AG04449 (cell line): ENCODE measurements at regions of chr3 and their contacts with region 1.

Region 1: GRCh38 chr3:66971891-66972551 is 26.1 kb upstream of the KBTBD8 start:
- DNase-seq: peak; percentile 5
- H3K4me3 ChIP-seq: peak overlapping the region; percentile 51
- CTCF ChIP-seq: peak; percentile 91

Region 2: GRCh38 chr3:66898155-66898554 is 73.9 kb before region 1 on chr3:
- CTCF ChIA-PET with region 1: no interaction called
- POLR2A ChIA-PET with region 1: no interaction called
- DNase-seq: no peak
- H3K4me3 ChIP-seq: no peak overlapping the region
- CTCF ChIP-seq: no peak

Region 3: GRCh38 chr3:66922058-66922457 is 50.0 kb before region 1 on chr3:
- CTCF ChIA-PET with region 1: no interaction called
- POLR2A ChIA-PET with region 1: no interaction called
- DNase-seq: no peak
- H3K4me3 ChIP-seq: no peak overlapping the region
- CTCF ChIP-seq: no peak

Region 4: DNA sequence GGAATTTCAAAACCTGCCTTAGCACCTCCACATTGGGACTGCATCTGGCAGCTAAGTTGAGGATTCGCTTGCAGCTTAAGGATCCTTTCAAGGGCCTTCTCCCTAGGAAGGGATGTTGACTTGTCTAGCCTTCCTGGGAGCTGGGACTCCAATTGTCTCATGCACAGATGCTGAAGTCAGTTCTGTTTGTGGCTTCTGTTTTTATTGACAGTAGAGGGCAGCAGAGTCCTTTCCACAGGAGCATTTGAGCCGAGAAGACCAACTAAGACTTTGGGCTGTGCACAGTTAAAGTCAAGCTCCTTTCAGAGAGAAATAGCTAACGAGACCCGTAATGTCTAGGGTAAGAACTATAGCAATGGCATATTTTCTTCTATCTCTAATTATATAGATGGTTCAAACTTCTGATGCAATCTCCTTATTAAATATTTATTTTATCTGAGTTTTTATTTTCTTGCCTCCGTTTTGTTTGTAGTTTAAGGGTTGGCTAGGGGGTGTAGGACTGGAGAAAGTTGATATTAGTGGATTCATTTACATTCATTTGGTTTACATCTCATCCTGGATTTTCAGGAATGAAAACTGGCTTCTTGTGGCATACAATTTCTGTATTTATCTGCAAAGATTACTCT is 33.6 kb before region 1 on chr3:
- CTCF ChIA-PET with region 1: interaction called, 26 read pairs
- POLR2A ChIA-PET with region 1: no interaction called
- DNase-seq: no peak
- H3K4me3 ChIP-seq: no peak overlapping the region
- CTCF ChIP-seq: peak; percentile 68

Region 5: DNA sequence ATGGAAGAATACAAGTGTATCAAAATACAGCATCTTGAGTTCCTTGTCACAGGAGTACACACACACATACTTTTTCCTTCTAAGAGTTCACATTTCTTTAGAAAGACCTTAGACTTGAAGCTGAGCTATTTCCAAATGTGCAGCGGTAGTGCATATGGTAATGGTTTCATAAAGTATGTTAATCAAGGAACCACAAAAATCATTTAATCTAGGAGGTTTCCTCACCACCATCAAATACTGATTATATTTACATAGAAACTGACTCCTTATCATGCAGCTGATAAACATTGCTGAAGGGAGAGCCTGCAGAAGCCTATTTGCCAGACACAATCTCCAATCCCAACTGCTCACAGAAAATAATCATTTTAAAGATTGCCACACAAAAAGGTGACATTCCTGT is 14.0 kb before region 1 on chr3:
- CTCF ChIA-PET with region 1: interaction called, 18 read pairs
- POLR2A ChIA-PET with region 1: no interaction called
- DNase-seq: no peak
- H3K4me3 ChIP-seq: no peak overlapping the region
- CTCF ChIP-seq: no peak

Region 6: GRCh38 chr3:66989860-66990665 is 18.0 kb after region 1 on chr3:
- CTCF ChIA-PET with region 1: interaction called, 51 read pairs
- POLR2A ChIA-PET with region 1: no interaction called
- DNase-seq: no peak
- H3K4me3 ChIP-seq: no peak overlapping the region
- CTCF ChIP-seq: no peak

Region 7: DNA sequence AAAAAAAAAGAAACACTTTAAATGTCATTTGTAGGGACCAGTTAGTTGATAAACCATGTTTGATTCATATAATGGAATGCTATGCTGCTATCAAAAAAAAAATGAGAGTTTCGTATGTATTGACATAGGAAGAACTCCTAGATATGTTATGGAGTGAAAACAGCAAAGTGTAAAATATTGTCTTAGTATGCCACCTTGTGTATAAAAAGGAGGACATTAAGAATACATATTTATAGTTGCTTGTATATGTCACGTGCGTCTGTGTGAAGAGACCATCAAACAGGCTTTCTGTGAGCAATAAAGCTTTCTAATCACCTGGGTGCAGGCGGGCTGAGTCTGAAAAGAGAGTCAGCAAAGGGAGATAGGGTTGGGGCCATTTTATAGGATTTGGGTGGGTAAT is 65.6 kb after region 1 on chr3:
- CTCF ChIA-PET with region 1: interaction called, 26 read pairs
- POLR2A ChIA-PET with region 1: no interaction called
- DNase-seq: no peak
- H3K4me3 ChIP-seq: no peak overlapping the region
- CTCF ChIP-seq: no peak

Region 8: DNA sequence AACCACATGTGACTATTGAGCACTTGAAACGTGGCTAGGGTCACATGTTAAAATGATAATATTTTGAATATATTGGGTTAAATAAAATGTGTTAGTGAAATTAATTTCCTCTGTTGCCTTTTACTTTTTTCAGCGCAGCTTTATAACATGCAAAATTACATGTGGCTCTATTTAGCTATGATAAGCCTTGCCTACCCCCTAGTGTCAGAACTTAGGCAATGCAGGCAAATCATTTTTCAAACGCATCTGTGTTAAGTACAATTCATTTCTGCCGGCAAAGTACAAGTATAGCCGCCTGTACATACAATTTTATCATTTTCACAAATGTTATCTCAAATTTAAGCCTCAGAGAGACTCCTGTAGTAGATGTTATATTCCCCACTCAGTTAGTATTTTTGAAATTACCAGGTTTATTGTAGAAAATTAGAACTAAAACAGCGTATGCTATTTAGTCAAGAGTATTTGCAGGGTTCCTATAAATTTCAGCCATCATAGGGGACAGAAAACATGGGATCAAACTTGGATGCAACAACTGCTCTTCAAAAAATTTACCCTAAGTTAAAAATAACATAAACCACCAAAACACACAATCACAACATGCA is 1904.2 kb after region 1 on chr3:
- CTCF ChIA-PET with region 1: interaction called, 115 read pairs
- POLR2A ChIA-PET with region 1: no interaction called
- DNase-seq: peak; percentile 26
- H3K4me3 ChIP-seq: no peak overlapping the region
- CTCF ChIP-seq: peak; percentile 75

Region 9: GRCh38 chr3:68972358-68972979 is 2000.4 kb after region 1 on chr3:
- CTCF ChIA-PET with region 1: interaction called, 12 read pairs
- POLR2A ChIA-PET with region 1: no interaction called
- DNase-seq: no peak
- H3K4me3 ChIP-seq: no peak overlapping the region
- CTCF ChIP-seq: peak; percentile 84